CD4-positive, alpha-beta memory T cell (primary cell): ENCODE measurements at regions of chr12 and their contacts with region 1.

Region 1: GRCh38 chr12:95217377-95218149 is at the starts of genes FGD6 and VEZT:
- DNase-seq: peak; percentile 98 to 100 (median 98)
- H3K4me3 ChIP-seq: peak within 1 kb of the TSS; percentile 87 to 97
- H3K4me3 Mint-ChIP-seq: peak within 1 kb of the TSS; percentile 94 to 100 (median 96)
- H3K27ac ChIP-seq: peak within 1 kb of the TSS; percentile 97
- H3K27ac Mint-ChIP-seq: peak within 1 kb of the TSS; percentile 92 to 100 (median 97)
- H3K4me1 ChIP-seq: peaks cover 34% of the 10 kb centered on the region
- H3K4me1 Mint-ChIP-seq: peaks cover 23 to 45% (median 34%) of the 10 kb centered on the region in 4 donors
- H3K27me3 ChIP-seq: no peaks in the 10 kb centered on the region
- H3K27me3 Mint-ChIP-seq: peaks cover 0 to 1% of the 10 kb centered on the region in 2 donors
- total RNA-seq, gene FGD6: 0.69 to 0.70 TPM
- total RNA-seq, gene VEZT: 43.9 to 49.4 TPM

Region 2: GRCh38 chr12:93569656-93570551 is 1647.7 kb before region 1 on chr12:
- CTCF ChIA-PET with region 1: no interaction called
- POLR2A ChIA-PET with region 1: no interaction called
- intact Hi-C with region 1: loop called (anchors 2 kb)
- DNase-seq: peak; percentile 73 to 80 (median 74)
- H3K4me3 ChIP-seq: peak overlapping the region; percentile 71 to 78
- H3K4me3 Mint-ChIP-seq: peak overlapping the region; percentile 90 to 98 (median 92)
- H3K27ac ChIP-seq: peak overlapping the region; percentile 73
- H3K27ac Mint-ChIP-seq: peak overlapping the region; percentile 87 to 96 (median 92)
- H3K4me1 ChIP-seq: peaks cover 28% of the 10 kb centered on the region
- H3K4me1 Mint-ChIP-seq: peaks cover 16 to 41% (median 28%) of the 10 kb centered on the region in 4 donors
- H3K27me3 ChIP-seq: peaks cover 3% of the 10 kb centered on the region
- H3K27me3 Mint-ChIP-seq: peaks cover 1 to 2% of the 10 kb centered on the region in 2 donors

Region 3: GRCh38 chr12:95003213-95003920 is 214.2 kb before region 1 on chr12 and contains the start of gene NDUFA12:
- CTCF ChIA-PET with region 1: interaction called, 4 read pairs
- POLR2A ChIA-PET with region 1: interaction called, 5 read pairs
- intact Hi-C with region 1: loop called (anchors 1 kb)
- DNase-seq: peak; percentile 92 to 94 (median 93)
- H3K4me3 ChIP-seq: peak within 1 kb of the TSS; percentile 83 to 96
- H3K4me3 Mint-ChIP-seq: peak within 1 kb of the TSS; percentile 93 to 99 (median 95)
- H3K27ac ChIP-seq: peak within 1 kb of the TSS; percentile 80
- H3K27ac Mint-ChIP-seq: peak within 1 kb of the TSS; percentile 92 to 97 (median 96)
- H3K4me1 ChIP-seq: peaks cover 61% of the 10 kb centered on the region
- H3K4me1 Mint-ChIP-seq: peaks cover 32 to 55% (median 42%) of the 10 kb centered on the region in 4 donors
- H3K27me3 ChIP-seq: no peaks in the 10 kb centered on the region
- H3K27me3 Mint-ChIP-seq: no peaks in the 10 kb centered on the region
- total RNA-seq, gene NDUFA12: 55.5 to 61.5 TPM

Region 4: DNA sequence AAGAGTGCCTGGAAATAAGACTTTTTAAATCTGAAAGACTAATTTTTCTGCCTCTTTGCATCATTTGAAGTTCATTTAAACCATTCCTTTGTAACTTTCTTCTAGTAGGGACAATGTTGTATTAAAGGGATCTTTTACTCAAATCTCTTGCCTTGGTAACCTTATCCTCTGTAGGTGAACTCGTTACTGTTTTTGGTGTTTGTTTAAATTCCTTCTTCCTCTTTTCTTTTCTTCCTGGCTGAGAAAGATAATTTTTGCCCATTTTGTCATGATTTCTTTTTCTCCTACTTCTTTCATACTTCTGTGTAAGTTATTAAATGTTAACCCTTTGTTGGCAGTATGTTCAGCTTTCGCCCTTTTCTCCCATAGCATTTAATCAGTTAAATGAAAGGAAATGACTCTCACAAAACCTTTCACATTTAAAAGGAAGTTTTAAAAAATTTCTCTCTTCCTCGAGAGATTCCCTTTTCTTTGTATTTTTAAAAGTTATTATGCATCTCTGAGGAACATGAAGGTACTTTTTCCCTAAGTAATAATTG is 10.3 kb after region 1 on chr12:
- CTCF ChIA-PET with region 1: interaction called, 4 read pairs
- POLR2A ChIA-PET with region 1: interaction called, 10 read pairs
- intact Hi-C with region 1: no loop called
- DNase-seq: no peak
- H3K4me3 ChIP-seq: no peak overlapping the region
- H3K4me3 Mint-ChIP-seq: peak overlapping the region in 1 of 8 donors; percentile 32
- H3K27ac ChIP-seq: no peak overlapping the region
- H3K27ac Mint-ChIP-seq: no peak overlapping the region
- H3K4me1 ChIP-seq: peaks cover 14% of the 10 kb centered on the region
- H3K4me1 Mint-ChIP-seq: peaks cover 13 to 46% (median 29%) of the 10 kb centered on the region in 4 donors
- H3K27me3 ChIP-seq: no peaks in the 10 kb centered on the region
- H3K27me3 Mint-ChIP-seq: no peaks in the 10 kb centered on the region

Region 5: GRCh38 chr12:95548539-95549391 is 331.2 kb after region 1 on chr12:
- CTCF ChIA-PET with region 1: no interaction called
- POLR2A ChIA-PET with region 1: interaction called, 5 read pairs
- intact Hi-C with region 1: loop called (anchors 5 kb)
- DNase-seq: peak; percentile 66 to 73 (median 71)
- H3K4me3 ChIP-seq: peak overlapping the region in 1 of 2 donors; percentile 68
- H3K4me3 Mint-ChIP-seq: peak overlapping the region; percentile 83 to 92 (median 88)
- H3K27ac ChIP-seq: peak overlapping the region; percentile 60
- H3K27ac Mint-ChIP-seq: peak overlapping the region; percentile 45 to 93 (median 85)
- H3K4me1 ChIP-seq: peaks cover 13% of the 10 kb centered on the region
- H3K4me1 Mint-ChIP-seq: peaks cover 14 to 60% (median 27%) of the 10 kb centered on the region in 4 donors
- H3K27me3 ChIP-seq: no peaks in the 10 kb centered on the region
- H3K27me3 Mint-ChIP-seq: peaks cover 6 to 17% of the 10 kb centered on the region in 2 donors

Region 6: GRCh38 chr12:95922231-95922630 is 704.7 kb after region 1 on chr12:
- CTCF ChIA-PET with region 1: no interaction called
- POLR2A ChIA-PET with region 1: no interaction called
- intact Hi-C with region 1: no loop called
- DNase-seq: no peak
- H3K4me3 ChIP-seq: no peak overlapping the region
- H3K4me3 Mint-ChIP-seq: no peak overlapping the region
- H3K27ac ChIP-seq: no peak overlapping the region
- H3K27ac Mint-ChIP-seq: no peak overlapping the region
- H3K4me1 ChIP-seq: no peaks in the 10 kb centered on the region
- H3K4me1 Mint-ChIP-seq: no peaks in the 10 kb centered on the region
- H3K27me3 ChIP-seq: no peaks in the 10 kb centered on the region
- H3K27me3 Mint-ChIP-seq: no peaks in the 10 kb centered on the region

Region 7: GRCh38 chr12:96035278-96036236 is 818.0 kb after region 1 on chr12 and contains the start of gene LTA4H:
- CTCF ChIA-PET with region 1: no interaction called
- POLR2A ChIA-PET with region 1: interaction called, 4 read pairs
- intact Hi-C with region 1: loop called (anchors 2 kb)
- DNase-seq: peak; percentile 97 to 98 (median 97)
- H3K4me3 ChIP-seq: peak within 1 kb of the TSS; percentile 95 to 98
- H3K4me3 Mint-ChIP-seq: no peak within 1 kb of the TSS
- H3K27ac ChIP-seq: peak within 1 kb of the TSS; percentile 76
- H3K27ac Mint-ChIP-seq: no peak within 1 kb of the TSS
- H3K4me1 ChIP-seq: peaks cover 23% of the 10 kb centered on the region
- H3K4me1 Mint-ChIP-seq: peaks cover 4 to 14% (median 8%) of the 10 kb centered on the region in 4 donors
- H3K27me3 ChIP-seq: no peaks in the 10 kb centered on the region
- H3K27me3 Mint-ChIP-seq: no peaks in the 10 kb centered on the region
- total RNA-seq, gene LTA4H: 57.7 to 58.2 TPM